Gastrocnemius medialis (tissue), 4 donors: ENCODE measurements at regions of chr4 and their contacts with region 1.

Region 1: DNA sequence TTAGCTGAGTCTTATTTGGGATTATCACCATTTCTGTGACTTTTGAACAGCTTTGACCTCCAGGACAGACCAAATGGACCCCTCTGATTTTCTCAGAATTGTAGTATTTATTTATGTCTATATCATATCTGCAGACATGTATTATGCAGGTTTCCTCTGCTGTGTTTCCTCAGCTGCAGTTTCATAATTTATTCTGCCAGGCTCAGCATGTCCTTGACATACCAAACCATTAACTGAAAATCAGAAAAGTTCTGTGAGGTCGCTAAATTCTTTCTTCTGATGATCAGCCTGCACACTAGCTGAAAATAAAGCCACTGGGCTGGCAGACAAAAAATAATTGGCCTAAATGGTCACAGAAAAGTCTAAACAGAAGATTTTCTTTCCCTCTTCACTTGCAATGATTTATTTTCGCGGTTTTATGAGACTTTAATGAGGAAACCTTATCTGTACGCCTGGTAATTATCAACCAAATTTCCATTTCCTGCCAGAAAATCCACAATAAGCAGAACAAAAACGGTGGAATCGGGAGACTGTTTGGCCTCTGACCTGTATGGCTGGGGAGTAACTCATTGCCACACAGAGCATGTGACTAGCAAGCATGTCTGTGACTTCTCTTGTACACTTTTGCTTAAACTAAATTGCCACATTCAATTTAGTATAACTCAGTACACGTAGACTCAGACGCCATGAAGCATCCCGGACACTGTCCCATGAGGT is 150.9 kb downstream of the ENPP6 start:
- DNase-seq: no peak
- ATAC-seq: no peak
- H3K4me3 ChIP-seq: no peak overlapping the region
- H3K27ac ChIP-seq: no peak overlapping the region
- H3K4me1 ChIP-seq: no peaks in the 10 kb centered on the region
- H3K27me3 ChIP-seq: no peaks in the 10 kb centered on the region
- CTCF ChIP-seq: no peak
- POLR2A ChIP-seq: no peak

Region 2: DNA sequence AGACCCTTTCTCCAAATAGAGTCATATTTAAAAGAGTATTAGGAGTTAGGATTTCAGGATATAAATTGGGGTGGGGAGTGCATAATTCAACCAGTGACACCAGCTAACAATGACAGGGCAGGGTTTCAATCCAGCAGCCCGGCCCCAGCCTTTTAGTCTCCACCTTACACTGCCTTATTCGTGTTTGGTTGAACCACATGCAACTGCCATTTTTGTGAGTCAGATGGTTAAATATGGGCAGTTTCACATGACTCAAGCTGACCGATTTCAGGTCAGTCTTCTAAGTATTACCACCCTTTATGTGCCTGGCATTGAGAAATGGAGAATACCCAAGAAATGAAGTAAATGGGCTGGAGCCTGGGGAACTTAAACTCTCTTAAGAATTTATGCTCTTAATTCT is 58.9 kb before region 1 on chr4:
- in situ Hi-C with region 1: loop called in 1 of 4 experiments (anchors 10 kb)
- intact Hi-C with region 1: no loop called
- DNase-seq: no peak
- ATAC-seq: peak in 1 of 2 donors; percentile 39
- H3K4me3 ChIP-seq: no peak overlapping the region
- H3K27ac ChIP-seq: no peak overlapping the region
- H3K4me1 ChIP-seq: no peaks in the 10 kb centered on the region
- H3K27me3 ChIP-seq: no peaks in the 10 kb centered on the region
- CTCF ChIP-seq: no peak
- POLR2A ChIP-seq: no peak

Region 3: DNA sequence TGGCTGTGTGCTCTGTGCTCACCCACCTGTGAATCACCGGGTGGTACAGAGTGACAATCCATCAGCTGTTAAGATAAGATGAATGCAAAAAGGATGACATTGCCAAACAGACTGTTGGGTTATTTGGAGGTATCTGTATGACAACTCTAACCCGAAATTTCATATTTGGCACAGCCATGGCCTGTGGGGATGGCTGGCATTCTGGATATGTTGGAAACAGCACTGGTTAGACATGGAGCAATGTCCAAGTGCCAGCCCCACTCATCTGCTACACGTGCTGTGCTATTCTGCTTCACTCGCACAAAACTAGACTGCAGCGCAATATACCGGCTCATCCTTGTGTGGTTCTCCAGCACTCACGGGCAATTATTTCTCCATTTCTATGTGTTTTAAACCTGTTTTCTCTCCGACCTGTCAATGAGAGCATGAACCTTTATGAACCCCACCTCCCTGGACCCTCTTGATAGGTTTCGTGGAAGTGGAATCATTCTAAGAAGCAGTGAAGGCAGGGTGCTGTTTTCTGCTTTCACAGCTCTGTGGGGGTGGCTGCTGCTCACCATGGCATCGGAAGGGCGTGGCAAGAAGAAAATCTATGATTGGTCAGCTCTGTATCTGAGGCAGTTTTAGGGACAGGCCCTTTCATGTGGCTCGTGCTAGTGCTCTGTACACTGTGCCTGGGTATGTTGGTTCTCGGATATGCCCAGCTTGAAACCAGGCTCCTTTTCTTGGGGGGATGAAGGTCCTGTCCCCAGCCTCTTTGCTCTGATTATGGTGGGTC is 56.1 kb after region 1 on chr4:
- in situ Hi-C with region 1: no loop called
- intact Hi-C with region 1: no loop called
- DNase-seq: no peak
- ATAC-seq: no peak
- H3K4me3 ChIP-seq: no peak overlapping the region
- H3K27ac ChIP-seq: no peak overlapping the region
- H3K4me1 ChIP-seq: no peaks in the 10 kb centered on the region
- H3K27me3 ChIP-seq: no peaks in the 10 kb centered on the region
- CTCF ChIP-seq: no peak
- POLR2A ChIP-seq: no peak